ENCODE measurements at regions of chr10 and their contacts with region 1.

Region 1: DNA sequence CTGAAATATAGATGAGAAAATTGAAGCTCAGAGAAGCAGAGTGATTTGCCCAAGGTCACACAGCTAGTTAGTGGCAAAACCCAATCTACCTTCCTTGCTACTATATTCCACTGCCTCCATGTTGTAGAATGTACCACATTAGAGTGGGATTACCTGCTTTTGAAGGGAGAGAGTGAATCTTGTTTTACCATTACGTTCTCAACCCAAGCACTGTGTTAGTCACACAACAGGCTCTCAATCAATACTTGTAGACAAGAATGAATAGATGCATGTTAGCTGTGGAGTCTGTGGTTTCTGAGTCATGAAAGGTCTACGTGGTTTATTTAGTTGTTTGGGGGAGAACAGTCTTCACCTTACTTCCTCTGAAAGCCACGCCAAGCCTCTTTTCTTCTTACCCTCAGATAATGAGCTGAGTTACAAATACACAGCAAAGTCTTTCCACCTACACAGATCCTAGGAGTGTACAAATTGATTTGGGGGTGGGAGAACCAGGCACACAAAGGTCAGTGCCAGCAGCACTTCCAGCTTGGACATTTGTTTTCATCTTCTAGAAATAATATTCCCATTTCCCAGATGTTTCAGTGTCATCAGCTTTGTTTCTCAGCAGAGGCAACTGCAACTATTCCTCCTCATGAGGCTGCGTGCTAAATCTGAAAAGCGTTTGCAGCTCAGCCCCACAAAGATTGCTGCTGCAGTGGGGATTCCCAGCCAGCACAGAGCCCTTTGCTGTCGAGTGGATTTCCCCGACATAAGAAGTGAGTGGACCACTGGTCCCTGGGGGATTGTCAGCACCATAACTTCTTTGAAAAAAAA is 71.5 kb upstream of the ADO start:
- DNase-seq: peak; percentile 76
- ATAC-seq: peak; percentile 81
- H3K4me3 Mint-ChIP-seq: peak overlapping the region; percentile 49
- H3K27ac Mint-ChIP-seq: no peak overlapping the region
- H3K4me1 Mint-ChIP-seq: peaks cover 21% of the 10 kb centered on the region
- H3K27me3 Mint-ChIP-seq: peaks cover 3% of the 10 kb centered on the region
- CTCF ChIP-seq: no peak

Region 2: GRCh38 chr10:62528441-62528840 is 204.6 kb before region 1 on chr10:
- CTCF ChIA-PET with region 1: no interaction called
- POLR2A ChIA-PET with region 1: no interaction called
- intact Hi-C with region 1: no loop called
- DNase-seq: no peak
- ATAC-seq: peak; percentile 94
- H3K4me3 Mint-ChIP-seq: peak overlapping the region; percentile 9
- H3K27ac Mint-ChIP-seq: peak overlapping the region; percentile 39
- H3K4me1 Mint-ChIP-seq: peaks cover 40% of the 10 kb centered on the region
- H3K27me3 Mint-ChIP-seq: no peaks in the 10 kb centered on the region
- CTCF ChIP-seq: no peak

Region 3: GRCh38 chr10:62610649-62611229 is 122.3 kb before region 1 on chr10:
- CTCF ChIA-PET with region 1: interaction called, 35 read pairs
- POLR2A ChIA-PET with region 1: interaction called, 4 read pairs
- intact Hi-C with region 1: loop called (anchors 5 kb)
- DNase-seq: peak; percentile 86
- ATAC-seq: peak; percentile 81
- H3K4me3 Mint-ChIP-seq: no peak overlapping the region
- H3K27ac Mint-ChIP-seq: no peak overlapping the region
- H3K4me1 Mint-ChIP-seq: peaks cover 40% of the 10 kb centered on the region
- H3K27me3 Mint-ChIP-seq: peaks cover 4% of the 10 kb centered on the region
- CTCF ChIP-seq: peak; percentile 87

Region 4: DNA sequence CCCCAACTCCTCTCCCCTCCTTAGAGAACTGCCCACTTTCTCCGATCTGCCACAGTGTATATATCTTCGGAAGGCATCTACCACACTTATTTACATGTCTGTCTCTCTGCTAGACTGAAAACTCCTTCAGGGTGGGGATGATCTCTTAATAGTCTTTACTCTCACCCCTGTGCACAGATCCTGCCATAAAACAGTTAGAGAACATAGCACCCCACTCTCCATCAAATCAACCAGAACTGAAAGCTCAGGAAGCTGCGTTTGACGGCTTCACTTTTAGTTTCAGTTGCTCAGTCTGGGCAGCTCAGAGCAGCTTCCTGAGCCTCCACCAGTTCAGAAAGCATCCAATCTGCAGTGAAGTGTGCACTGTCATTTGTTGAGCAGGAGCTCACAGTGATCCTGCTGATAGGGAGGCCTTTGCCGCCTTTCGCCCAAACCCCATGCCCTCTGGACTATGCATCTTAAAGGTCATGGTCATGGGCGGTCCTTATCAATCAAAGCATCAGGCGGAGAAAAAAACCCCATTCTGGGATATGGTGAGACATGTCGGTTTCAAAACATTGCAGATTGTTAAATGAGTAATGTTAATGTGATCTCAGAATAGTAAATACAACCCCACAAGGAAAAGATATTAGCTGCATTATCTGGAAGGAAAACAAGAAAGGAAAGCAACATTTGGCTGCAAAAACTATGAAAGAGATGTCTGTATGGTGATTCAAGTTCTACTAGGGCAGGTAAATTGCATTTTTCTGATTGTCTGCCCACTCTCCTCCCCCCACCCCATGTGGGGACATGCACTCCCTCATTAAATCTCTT is 95.6 kb before region 1 on chr10:
- CTCF ChIA-PET with region 1: interaction called, 4 read pairs
- POLR2A ChIA-PET with region 1: interaction called, 6 read pairs
- intact Hi-C with region 1: loop called (anchors 5 kb)
- DNase-seq: peak; percentile 90
- ATAC-seq: peak; percentile 93
- H3K4me3 Mint-ChIP-seq: no peak overlapping the region
- H3K27ac Mint-ChIP-seq: no peak overlapping the region
- H3K4me1 Mint-ChIP-seq: peaks cover 25% of the 10 kb centered on the region
- H3K27me3 Mint-ChIP-seq: no peaks in the 10 kb centered on the region
- CTCF ChIP-seq: no peak

Region 5: GRCh38 chr10:62696798-62697197 is 36.2 kb before region 1 on chr10:
- CTCF ChIA-PET with region 1: no interaction called
- POLR2A ChIA-PET with region 1: no interaction called
- intact Hi-C with region 1: no loop called
- DNase-seq: no peak
- ATAC-seq: peak; percentile 47
- H3K4me3 Mint-ChIP-seq: no peak overlapping the region
- H3K27ac Mint-ChIP-seq: no peak overlapping the region
- H3K4me1 Mint-ChIP-seq: peaks cover 26% of the 10 kb centered on the region
- H3K27me3 Mint-ChIP-seq: peaks cover 3% of the 10 kb centered on the region
- CTCF ChIP-seq: no peak

Region 6: GRCh38 chr10:62748386-62748785 is 15.3 kb after region 1 on chr10:
- CTCF ChIA-PET with region 1: interaction called, 12 read pairs
- POLR2A ChIA-PET with region 1: interaction called, 6 read pairs
- intact Hi-C with region 1: no loop called
- DNase-seq: no peak
- ATAC-seq: peak; percentile 24
- H3K4me3 Mint-ChIP-seq: no peak overlapping the region
- H3K27ac Mint-ChIP-seq: peak overlapping the region; percentile 88
- H3K4me1 Mint-ChIP-seq: peaks cover 22% of the 10 kb centered on the region
- H3K27me3 Mint-ChIP-seq: no peaks in the 10 kb centered on the region
- CTCF ChIP-seq: no peak

Region 7: GRCh38 chr10:62779487-62780248 is 46.6 kb after region 1 on chr10:
- CTCF ChIA-PET with region 1: interaction called, 25 read pairs
- POLR2A ChIA-PET with region 1: interaction called, 15 read pairs
- intact Hi-C with region 1: loop called (anchors 1 kb)
- DNase-seq: peak; percentile 98
- ATAC-seq: peak; percentile 94
- H3K4me3 Mint-ChIP-seq: no peak overlapping the region
- H3K27ac Mint-ChIP-seq: peak overlapping the region; percentile 80
- H3K4me1 Mint-ChIP-seq: peaks cover 44% of the 10 kb centered on the region
- H3K27me3 Mint-ChIP-seq: no peaks in the 10 kb centered on the region
- CTCF ChIP-seq: no peak

Region 8: DNA sequence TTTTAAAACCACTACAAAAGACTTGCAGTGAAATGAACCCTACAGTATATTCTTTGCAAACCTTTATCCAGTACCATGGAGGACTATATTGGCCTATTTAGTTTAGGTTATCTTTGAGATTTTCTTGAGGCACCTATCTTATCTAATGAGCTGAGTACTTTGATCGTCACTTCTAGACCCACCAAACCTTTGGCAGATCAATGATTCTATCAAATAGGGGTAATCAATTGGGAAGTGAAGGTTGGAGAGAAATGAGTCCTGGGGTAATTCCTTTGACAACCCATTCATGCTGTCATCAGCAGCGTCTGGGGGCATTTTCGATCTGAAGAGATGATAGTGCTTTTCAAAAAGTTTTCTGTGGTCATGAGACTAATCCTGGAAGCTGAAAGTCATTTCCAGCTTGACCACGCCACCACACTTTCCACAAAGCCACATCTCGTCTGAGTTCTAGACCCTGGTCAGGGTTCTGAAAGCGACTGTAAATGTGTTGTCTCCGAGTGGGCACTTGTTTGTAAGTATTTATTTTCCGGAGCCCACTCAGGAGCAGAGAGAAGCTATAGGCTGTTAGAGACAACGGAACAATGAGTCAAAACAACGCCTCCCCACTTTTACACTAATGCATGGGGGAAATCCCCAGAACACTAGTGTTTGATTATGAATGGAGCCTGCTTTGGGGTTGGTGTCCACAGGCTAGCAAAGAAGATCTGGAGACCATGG is 78.3 kb after region 1 on chr10:
- CTCF ChIA-PET with region 1: interaction called, 7 read pairs
- POLR2A ChIA-PET with region 1: interaction called, 46 read pairs
- intact Hi-C with region 1: loop called (anchors 1 kb)
- DNase-seq: peak; percentile 96
- ATAC-seq: peak; percentile 47
- H3K4me3 Mint-ChIP-seq: peak overlapping the region; percentile 97
- H3K27ac Mint-ChIP-seq: peak overlapping the region; percentile 67
- H3K4me1 Mint-ChIP-seq: peaks cover 73% of the 10 kb centered on the region
- H3K27me3 Mint-ChIP-seq: no peaks in the 10 kb centered on the region
- CTCF ChIP-seq: no peak

Region 9: DNA sequence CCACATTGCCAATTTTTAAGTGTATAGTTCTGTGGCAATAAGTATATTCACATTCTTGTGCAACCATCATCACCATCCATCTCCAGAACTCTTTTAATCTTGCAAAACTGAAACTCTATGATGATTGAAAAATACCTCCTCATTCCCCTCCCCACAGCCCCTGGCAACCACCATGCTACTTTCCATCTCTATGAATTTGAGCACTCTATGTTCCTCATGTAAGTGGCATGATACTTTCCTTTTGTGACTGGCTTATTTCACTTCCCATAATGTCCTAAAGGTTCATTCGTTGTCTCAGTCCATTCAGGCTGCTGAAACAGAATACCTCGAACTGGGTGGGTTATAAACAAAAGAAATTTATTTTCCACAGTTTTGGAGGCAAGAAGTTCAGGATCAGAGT is 106.5 kb after region 1 on chr10:
- CTCF ChIA-PET with region 1: no interaction called
- POLR2A ChIA-PET with region 1: no interaction called
- intact Hi-C with region 1: no loop called
- DNase-seq: peak; percentile 22
- ATAC-seq: no peak
- H3K4me3 Mint-ChIP-seq: no peak overlapping the region
- H3K27ac Mint-ChIP-seq: no peak overlapping the region
- H3K4me1 Mint-ChIP-seq: peaks cover 14% of the 10 kb centered on the region
- H3K27me3 Mint-ChIP-seq: peaks cover 18% of the 10 kb centered on the region
- CTCF ChIP-seq: no peak

Region 10: GRCh38 chr10:62851442-62851841 is 118.4 kb after region 1 on chr10:
- CTCF ChIA-PET with region 1: no interaction called
- POLR2A ChIA-PET with region 1: interaction called, 4 read pairs
- intact Hi-C with region 1: loop called (anchors 2 kb)
- DNase-seq: peak; percentile 48
- ATAC-seq: no peak
- H3K4me3 Mint-ChIP-seq: no peak overlapping the region
- H3K27ac Mint-ChIP-seq: no peak overlapping the region
- H3K4me1 Mint-ChIP-seq: peaks cover 56% of the 10 kb centered on the region
- H3K27me3 Mint-ChIP-seq: peaks cover 11% of the 10 kb centered on the region
- CTCF ChIP-seq: peak; percentile 63

Region 11: DNA sequence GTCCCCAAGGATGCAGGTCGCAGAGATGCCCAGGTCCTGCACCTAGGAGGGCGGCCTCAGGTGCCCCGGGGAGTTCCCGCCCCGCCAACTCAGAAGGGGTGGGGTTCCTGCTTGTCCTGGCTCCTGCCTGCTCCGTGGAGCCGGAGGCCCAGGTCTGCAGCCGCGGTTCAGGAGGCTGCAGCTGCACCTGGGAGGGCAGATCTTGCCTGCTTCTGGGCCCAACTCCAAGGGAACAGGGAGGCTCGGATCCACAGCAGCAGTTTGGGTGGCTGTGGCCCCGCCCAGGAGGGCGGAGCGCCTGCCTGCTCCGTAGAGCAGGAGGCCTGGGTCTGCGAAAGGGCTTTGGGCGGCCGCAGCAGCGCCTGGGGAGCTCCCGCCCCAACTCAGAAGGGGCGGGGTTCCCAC is 191.3 kb after region 1 on chr10:
- CTCF ChIA-PET with region 1: no interaction called
- POLR2A ChIA-PET with region 1: no interaction called
- intact Hi-C with region 1: no loop called
- DNase-seq: no peak
- ATAC-seq: no peak
- H3K4me3 Mint-ChIP-seq: no peak overlapping the region
- H3K27ac Mint-ChIP-seq: no peak overlapping the region
- H3K4me1 Mint-ChIP-seq: no peaks in the 10 kb centered on the region
- H3K27me3 Mint-ChIP-seq: peaks cover 7% of the 10 kb centered on the region
- CTCF ChIP-seq: no peak

Measured in activated CD8-positive, alpha-beta T cell treated with anti-CD3 and anti-CD28 coated beads for 36 hours (primary cell).